OCI-LY7 (cell line): ENCODE measurements at regions of chr6 and their contacts with region 1.

Region 1: GRCh38 chr6:133916650-133917151 is 27.8 kb downstream of the TCF21 start:
- DNase-seq: peak; percentile 76
- H3K4me3 ChIP-seq: peak overlapping the region; percentile 26
- H3K27ac ChIP-seq: no peak overlapping the region
- H3K4me1 ChIP-seq: no peaks in the 10 kb centered on the region
- CTCF ChIP-seq: peak; percentile 98

Region 2: DNA sequence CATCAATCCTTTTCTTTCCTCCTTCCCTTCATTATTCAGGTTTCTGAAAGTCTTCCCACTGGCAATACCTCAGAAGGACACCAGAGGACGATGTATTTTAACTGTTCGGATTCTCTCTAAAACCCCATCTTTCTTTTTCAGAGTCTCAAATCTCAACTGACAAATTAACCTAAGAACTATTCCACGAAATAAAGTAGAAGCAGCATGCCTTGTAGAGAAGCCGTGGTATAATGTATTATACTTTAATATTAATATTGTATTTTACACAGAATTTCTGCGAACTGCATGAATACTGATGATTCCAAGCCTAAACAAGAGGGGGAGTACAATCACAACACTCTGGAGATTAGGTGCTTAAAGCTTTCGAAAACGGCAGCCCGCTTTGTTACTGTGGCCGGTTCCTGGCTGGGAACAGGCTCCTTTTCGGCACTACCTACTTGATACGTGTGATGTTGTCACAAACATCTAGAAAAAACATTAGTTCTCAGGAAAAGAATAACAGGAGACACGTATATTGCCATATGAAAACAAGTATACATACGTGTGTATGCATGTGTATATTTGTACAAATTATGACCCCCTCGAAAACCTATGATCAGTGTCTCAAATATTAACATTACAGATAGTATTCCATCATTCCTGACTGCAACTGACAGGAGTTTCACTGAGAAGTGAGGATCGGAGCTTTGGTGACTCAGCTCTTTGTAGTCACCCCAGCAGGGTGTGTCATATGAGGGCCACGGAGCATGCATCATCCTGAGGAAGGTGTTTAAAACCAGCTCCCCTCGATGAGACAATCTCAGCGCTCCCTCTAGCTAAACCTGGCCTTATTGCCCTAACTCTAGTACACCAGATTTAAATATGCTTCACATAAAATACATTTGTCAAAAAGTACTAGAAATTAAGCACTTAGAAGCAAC is 347.5 kb before region 1 on chr6:
- CTCF ChIA-PET with region 1: interaction called, 4 read pairs
- POLR2A ChIA-PET with region 1: interaction called, 5 read pairs
- intact Hi-C with region 1: loop called (anchors 10 kb)
- DNase-seq: peak; percentile 8
- H3K4me3 ChIP-seq: no peak overlapping the region
- H3K27ac ChIP-seq: no peak overlapping the region
- H3K4me1 ChIP-seq: no peaks in the 10 kb centered on the region
- CTCF ChIP-seq: peak; percentile 77